Ovary (tissue), 10 donors: ENCODE measurements at regions of chr14 and their contacts with region 1.

Region 1: DNA sequence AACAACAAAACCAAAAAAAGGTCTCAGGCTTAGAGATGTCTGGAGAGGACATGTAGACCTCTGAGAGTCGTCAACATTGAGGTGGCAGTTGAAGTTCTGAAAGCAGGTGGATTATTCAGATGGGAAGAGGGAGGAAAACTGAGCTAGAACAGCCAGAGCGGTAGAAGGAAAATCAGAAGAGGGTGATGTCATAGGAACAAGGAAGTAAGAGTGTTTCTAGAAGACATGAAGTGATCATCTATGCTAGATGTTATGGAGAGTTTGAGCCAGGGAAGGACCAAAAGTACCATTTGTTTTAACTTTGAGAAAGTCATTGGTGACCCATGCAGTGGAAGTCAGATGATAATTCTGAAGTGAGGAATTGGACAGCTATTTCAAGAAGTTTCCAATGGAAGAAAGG is 316.2 kb upstream of the RGS6 start:
- DNase-seq: no peak
- H3K4me3 ChIP-seq: no peak overlapping the region
- H3K27ac ChIP-seq: no peak overlapping the region
- H3K4me1 ChIP-seq: no peaks in the 10 kb centered on the region
- H3K27me3 ChIP-seq: no peaks in the 10 kb centered on the region
- CTCF ChIP-seq: no peak
- EP300 ChIP-seq: no peak
- POLR2A ChIP-seq: no peak

Region 2: DNA sequence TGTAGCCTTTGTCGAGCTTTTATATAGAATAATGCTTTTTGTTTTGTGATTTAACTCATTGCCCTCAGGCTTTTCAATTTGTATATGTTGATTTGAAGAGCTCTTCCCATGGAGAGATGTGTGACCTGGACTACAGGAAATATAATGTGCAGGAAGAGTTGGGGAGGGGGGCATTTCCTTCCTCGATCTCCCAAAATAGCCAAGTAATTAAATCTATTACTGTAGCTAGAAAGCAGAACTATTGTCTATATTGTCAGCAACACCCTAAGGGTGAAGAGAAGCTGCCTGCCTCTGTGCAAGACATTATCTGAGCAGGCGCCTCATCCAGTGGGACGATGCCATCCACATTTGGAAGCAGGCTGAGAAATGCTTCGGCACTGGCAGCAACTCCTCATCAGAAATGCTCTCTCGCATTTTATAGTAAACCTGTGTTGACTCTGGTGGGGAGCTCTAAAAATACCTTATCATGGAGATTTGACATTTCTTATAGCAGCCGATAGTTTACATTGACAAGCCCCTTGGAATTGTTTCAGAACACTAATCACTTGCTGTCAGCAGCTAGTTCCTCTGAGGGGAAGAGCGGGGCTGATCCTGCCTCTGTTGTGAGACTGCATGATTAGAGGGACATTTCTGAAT is 76.2 kb before region 1 on chr14:
- intact Hi-C with region 1: no loop called
- DNase-seq: no peak
- H3K4me3 ChIP-seq: no peak overlapping the region
- H3K27ac ChIP-seq: no peak overlapping the region
- H3K4me1 ChIP-seq: peaks cover 6% of the 10 kb centered on the region
- H3K27me3 ChIP-seq: no peaks in the 10 kb centered on the region
- CTCF ChIP-seq: no peak
- EP300 ChIP-seq: no peak
- POLR2A ChIP-seq: no peak

Region 3: GRCh38 chr14:71662336-71662735 is 46.3 kb after region 1 on chr14:
- intact Hi-C with region 1: loop called in 1 of 4 experiments (anchors 1 kb)
- DNase-seq: no peak
- H3K4me3 ChIP-seq: no peak overlapping the region
- H3K27ac ChIP-seq: no peak overlapping the region
- H3K4me1 ChIP-seq: no peaks in the 10 kb centered on the region
- H3K27me3 ChIP-seq: no peaks in the 10 kb centered on the region
- CTCF ChIP-seq: no peak
- EP300 ChIP-seq: no peak
- POLR2A ChIP-seq: no peak

Region 4: GRCh38 chr14:71833476-71833875 is 217.5 kb after region 1 on chr14:
- intact Hi-C with region 1: no loop called
- DNase-seq: no peak
- H3K4me3 ChIP-seq: no peak overlapping the region
- H3K27ac ChIP-seq: no peak overlapping the region
- H3K4me1 ChIP-seq: no peaks in the 10 kb centered on the region
- H3K27me3 ChIP-seq: no peaks in the 10 kb centered on the region
- CTCF ChIP-seq: no peak
- EP300 ChIP-seq: no peak
- POLR2A ChIP-seq: no peak